ENCODE measurements at regions of chr2 and their contacts with region 1.

Region 1: GRCh38 chr2:246489-247144 is 17.2 kb downstream of the SH3YL1 start:
- DNase-seq: peak in 1 of 2 donors; percentile 9
- H3K4me3 ChIP-seq: no peak overlapping the region
- H3K27ac ChIP-seq: no peak overlapping the region
- H3K4me1 ChIP-seq: no peaks in the 10 kb centered on the region
- H3K27me3 ChIP-seq: no peaks in the 10 kb centered on the region
- CTCF ChIP-seq: peak in 4 of 6 experiments; percentile 30 to 58 (median 49)
- POLR2A ChIP-seq: no peak

Region 2: DNA sequence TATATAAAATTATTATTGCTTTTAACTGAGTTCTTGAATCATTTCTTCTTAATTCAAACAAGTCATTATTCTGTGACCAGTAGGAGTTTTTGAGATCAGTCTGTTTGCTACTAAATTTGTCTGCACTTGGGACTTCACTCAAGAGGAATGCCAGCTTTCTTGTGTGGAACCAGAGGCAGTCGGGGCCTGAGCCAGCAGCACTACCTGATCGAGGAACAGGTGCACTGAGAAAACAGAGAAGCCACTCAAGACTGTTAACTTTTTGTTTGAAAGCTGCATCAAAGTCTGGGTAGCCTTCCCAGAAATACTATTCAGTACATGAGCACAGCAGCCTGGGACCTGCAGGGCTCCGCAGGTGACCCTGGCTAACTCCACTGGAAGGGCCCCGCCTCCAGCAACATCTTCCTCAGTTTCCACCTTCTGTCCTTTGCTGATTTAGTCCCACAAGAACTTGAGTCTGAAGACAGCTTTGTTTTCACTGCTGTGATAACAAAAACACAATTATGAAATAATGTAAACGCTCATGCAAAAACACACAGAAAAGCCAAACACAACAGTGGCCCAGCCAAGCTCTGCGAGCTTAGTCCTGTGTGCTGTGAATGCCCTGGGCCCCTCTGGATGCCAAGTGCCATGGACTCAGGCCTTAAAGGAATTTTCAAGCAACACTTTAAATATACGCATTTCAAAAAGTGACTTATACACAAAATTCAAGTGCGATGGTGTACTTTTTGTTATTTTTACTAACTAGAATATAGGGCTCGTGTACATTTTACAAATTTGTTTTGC is 44.8 kb before region 1 on chr2:
- intact Hi-C with region 1: no loop called
- DNase-seq: peak; percentile 85 to 90
- H3K4me3 ChIP-seq: no peak overlapping the region
- H3K27ac ChIP-seq: peak overlapping the region in 2 of 3 donors; percentile 10 to 40
- H3K4me1 ChIP-seq: peaks cover 7 to 10% of the 10 kb centered on the region in 2 donors
- H3K27me3 ChIP-seq: no peaks in the 10 kb centered on the region
- CTCF ChIP-seq: no peak
- POLR2A ChIP-seq: no peak

Region 3: DNA sequence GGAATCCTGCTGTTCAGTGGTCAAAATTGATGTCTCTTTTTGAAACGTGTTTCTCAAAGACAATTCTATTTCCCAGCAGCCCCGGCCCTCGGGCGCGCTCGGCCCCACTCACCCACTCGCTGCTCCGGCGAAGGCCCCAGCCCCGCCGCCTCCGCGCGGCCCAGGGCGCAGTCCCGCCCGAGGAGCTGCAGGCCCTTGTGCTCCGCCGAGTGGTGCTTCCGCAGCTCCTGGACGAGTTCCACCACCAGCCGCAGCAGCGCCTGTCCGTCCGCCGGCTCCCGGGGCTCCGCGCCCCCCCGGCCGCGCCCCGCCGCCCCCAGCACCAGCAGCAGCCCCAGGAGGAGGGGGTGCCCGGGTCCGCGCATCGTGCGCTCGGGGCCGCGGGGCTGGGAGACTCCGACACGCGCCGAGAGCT is 40.9 kb after region 1 on chr2:
- intact Hi-C with region 1: loop called (anchors 5 kb)
- DNase-seq: peak; percentile 29 to 46
- H3K4me3 ChIP-seq: peak overlapping the region in 1 of 3 donors; percentile 39
- H3K27ac ChIP-seq: no peak overlapping the region
- H3K4me1 ChIP-seq: peaks cover 10 to 27% of the 10 kb centered on the region in 2 donors
- H3K27me3 ChIP-seq: peaks cover 3% of the 10 kb centered on the region
- CTCF ChIP-seq: no peak
- POLR2A ChIP-seq: no peak